Activated CD4-positive, alpha-beta T cell treated with anti-CD3 and anti-CD28 coated beads for 36 hours (primary cell): ENCODE measurements at regions of chr9 and their contacts with region 1.

Region 1: DNA sequence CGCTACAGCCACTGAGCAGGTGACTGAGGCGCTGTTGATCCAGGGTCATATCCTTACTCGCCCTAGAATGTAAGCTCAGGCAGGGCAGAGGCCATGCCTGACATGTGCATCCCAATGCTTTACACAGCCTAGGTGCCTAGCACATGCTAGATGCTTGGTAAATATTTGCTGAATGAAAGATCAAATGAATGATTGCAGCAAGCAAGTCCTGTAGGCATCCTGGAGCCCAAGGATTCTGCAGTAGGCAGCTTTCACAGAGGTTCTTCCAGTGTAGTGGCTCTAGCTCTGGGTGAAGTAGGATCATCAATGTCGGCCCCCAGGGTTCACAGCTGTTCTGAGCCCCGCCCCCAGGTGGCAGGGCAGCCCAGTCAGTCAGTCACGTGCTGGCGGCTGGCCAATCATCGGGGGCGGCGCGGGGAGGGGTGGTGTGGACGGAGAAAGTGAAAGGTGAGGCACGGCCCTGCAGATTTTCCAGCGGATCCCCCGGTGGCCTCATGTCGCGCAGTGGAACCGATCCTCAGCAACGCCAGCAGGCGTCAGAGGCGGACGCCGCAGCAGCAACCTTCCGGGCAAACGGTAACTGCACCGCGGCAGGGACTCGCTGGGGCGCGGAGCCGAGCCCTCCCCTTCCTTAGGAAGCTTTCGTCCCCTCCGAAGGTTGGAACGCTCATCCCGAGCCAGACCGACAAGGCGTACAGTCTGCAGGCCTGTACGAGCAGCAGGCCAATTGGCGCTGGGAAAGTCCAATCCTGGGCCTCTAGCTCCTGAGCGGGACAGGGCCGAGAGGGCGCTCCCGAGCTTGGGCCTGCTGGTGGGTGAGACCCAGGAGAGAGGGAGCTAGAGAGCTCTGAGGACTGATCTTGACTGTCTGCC is at the start of gene GALT:
- DNase-seq: peak; percentile 99
- ATAC-seq: peak; percentile 90
- H3K4me3 Mint-ChIP-seq: peak within 1 kb of the TSS; percentile 91
- H3K27ac Mint-ChIP-seq: peak within 1 kb of the TSS; percentile 89
- H3K4me1 Mint-ChIP-seq: peaks cover 26% of the 10 kb centered on the region
- H3K27me3 Mint-ChIP-seq: no peaks in the 10 kb centered on the region
- total RNA-seq, gene GALT: 45.1 to 53.9 TPM

Region 2: DNA sequence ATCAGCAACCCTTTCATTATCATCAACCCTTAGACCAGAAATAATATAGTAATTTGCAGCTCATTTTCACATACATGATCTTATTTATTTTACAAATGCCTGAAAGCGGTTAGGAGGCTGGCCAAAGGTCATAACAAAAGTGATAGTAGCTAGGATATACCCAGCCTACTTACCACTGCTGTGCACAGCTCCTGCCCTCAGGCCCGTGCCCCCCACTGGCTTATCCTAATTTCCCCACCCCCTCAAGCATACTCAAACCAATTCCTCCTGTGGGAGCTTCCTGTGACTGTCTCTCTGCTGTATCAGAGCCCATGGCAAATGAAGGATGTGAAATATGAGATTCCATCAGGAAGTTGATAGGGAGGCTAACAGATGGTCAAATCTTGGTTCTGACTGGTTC is 202.9 kb before region 1 on chr9:
- CTCF ChIA-PET with region 1: no interaction called
- POLR2A ChIA-PET with region 1: no interaction called
- intact Hi-C with region 1: no loop called
- DNase-seq: no peak
- ATAC-seq: no peak
- H3K4me3 Mint-ChIP-seq: no peak overlapping the region
- H3K27ac Mint-ChIP-seq: no peak overlapping the region
- H3K4me1 Mint-ChIP-seq: peaks cover 9% of the 10 kb centered on the region
- H3K27me3 Mint-ChIP-seq: no peaks in the 10 kb centered on the region

Region 3: GRCh38 chr9:34540828-34541227 is 105.6 kb before region 1 on chr9:
- CTCF ChIA-PET with region 1: no interaction called
- POLR2A ChIA-PET with region 1: no interaction called
- intact Hi-C with region 1: no loop called
- DNase-seq: no peak
- ATAC-seq: no peak
- H3K4me3 Mint-ChIP-seq: no peak overlapping the region
- H3K27ac Mint-ChIP-seq: no peak overlapping the region
- H3K4me1 Mint-ChIP-seq: no peaks in the 10 kb centered on the region
- H3K27me3 Mint-ChIP-seq: peaks cover 14% of the 10 kb centered on the region

Region 4: GRCh38 chr9:34611829-34612630 is 34.4 kb before region 1 on chr9 and contains the start of gene RPP25L:
- CTCF ChIA-PET with region 1: interaction called, 4 read pairs
- POLR2A ChIA-PET with region 1: interaction called, 3 read pairs
- intact Hi-C with region 1: loop called in 1 of 2 experiments (anchors 5 kb)
- DNase-seq: peak; percentile 91
- ATAC-seq: peak; percentile 97
- H3K4me3 Mint-ChIP-seq: peak within 1 kb of the TSS; percentile 86
- H3K27ac Mint-ChIP-seq: peak within 1 kb of the TSS; percentile 93
- H3K4me1 Mint-ChIP-seq: peaks cover 16% of the 10 kb centered on the region
- H3K27me3 Mint-ChIP-seq: no peaks in the 10 kb centered on the region
- total RNA-seq, gene RPP25L: 29.3 to 35.2 TPM

Region 5: DNA sequence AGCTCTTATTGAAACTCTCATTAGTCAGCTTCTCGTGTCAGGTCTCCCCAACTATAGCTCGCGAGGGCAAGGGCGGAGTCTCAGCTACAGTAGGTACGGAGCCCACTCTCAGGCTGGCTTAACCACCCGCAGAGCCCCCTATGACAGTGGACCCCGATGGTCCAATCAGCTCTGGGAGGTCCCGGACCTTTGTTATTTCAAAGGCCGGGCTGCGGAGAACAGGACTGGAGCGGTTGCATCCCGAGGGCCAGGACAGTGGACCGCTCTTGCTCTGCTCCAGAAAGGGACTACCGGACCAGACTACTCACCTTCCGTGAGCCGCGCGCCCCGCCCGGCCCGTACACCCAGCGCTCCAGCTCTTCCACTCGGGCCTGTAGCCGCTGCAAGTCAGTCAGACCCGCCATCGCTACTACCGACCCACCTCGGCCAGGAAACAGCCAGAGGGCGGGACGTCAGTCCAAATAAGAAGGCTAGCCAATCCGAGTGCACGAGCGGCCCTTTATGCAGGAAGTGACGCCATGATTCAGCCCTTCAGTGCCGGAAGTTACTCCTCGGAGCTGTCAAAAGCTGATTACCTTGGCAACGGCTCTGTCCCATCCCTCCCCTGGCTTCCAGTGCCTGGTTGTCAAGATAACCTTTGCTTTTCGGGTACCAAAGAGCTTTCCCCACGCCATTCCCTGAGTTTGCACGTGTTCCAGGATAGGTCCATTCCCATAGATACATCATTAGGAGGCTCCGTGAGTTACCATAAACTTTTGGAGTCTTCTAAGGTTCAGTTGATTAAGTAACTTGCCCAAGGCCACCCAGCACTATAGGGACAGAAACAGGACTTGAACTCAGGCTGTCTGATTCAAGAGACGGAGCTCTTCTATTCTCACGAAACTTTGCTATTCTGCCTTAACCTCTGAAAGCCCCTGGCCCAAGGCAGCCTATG is 26.1 kb before region 1 on chr9 and contains the start of gene DCTN3:
- CTCF ChIA-PET with region 1: interaction called, 9 read pairs
- POLR2A ChIA-PET with region 1: no interaction called
- intact Hi-C with region 1: loop called in 1 of 2 experiments (anchors 2 kb)
- DNase-seq: peak; percentile 95
- ATAC-seq: peak; percentile 99
- H3K4me3 Mint-ChIP-seq: peak within 1 kb of the TSS; percentile 88
- H3K27ac Mint-ChIP-seq: peak within 1 kb of the TSS; percentile 77
- H3K4me1 Mint-ChIP-seq: peaks cover 25% of the 10 kb centered on the region
- H3K27me3 Mint-ChIP-seq: peaks cover 25% of the 10 kb centered on the region
- total RNA-seq, gene DCTN3: 65.9 to 68.4 TPM

Region 6: GRCh38 chr9:34665381-34666250 is 19.2 kb after region 1 on chr9:
- CTCF ChIA-PET with region 1: interaction called, 23 read pairs
- POLR2A ChIA-PET with region 1: no interaction called
- intact Hi-C with region 1: loop called (anchors 1 kb)
- DNase-seq: peak; percentile 93
- ATAC-seq: peak; percentile 75
- H3K4me3 Mint-ChIP-seq: peak overlapping the region; percentile 77
- H3K27ac Mint-ChIP-seq: peak overlapping the region; percentile 87
- H3K4me1 Mint-ChIP-seq: peaks cover 33% of the 10 kb centered on the region
- H3K27me3 Mint-ChIP-seq: no peaks in the 10 kb centered on the region